ENCODE measurements at regions of chr16 and their contacts with region 1.

Region 1: GRCh38 chr16:53457670-53458069 is 23.4 kb downstream of the RBL2 start:
- DNase-seq: peak; percentile 89
- H3K4me3 ChIP-seq: peak overlapping the region; percentile 40
- H3K27ac ChIP-seq: peak overlapping the region; percentile 79
- H3K4me1 ChIP-seq: peaks cover 24% of the 10 kb centered on the region
- CTCF ChIP-seq: peak; percentile 47; the same call in 1 of the 2 replicates

Region 2: GRCh38 chr16:53503270-53503923 is 45.7 kb after region 1 on chr16:
- CTCF ChIA-PET with region 1: no interaction called
- POLR2A ChIA-PET with region 1: interaction called, 5 read pairs
- intact Hi-C with region 1: loop called (anchors 2 kb)
- DNase-seq: peak; percentile 100
- H3K4me3 ChIP-seq: peak overlapping the region; percentile 82
- H3K27ac ChIP-seq: peak overlapping the region; percentile 49
- H3K4me1 ChIP-seq: peaks cover 23% of the 10 kb centered on the region
- CTCF ChIP-seq: no peak